Vagina (tissue), 2 donors: ENCODE measurements at regions of chr16 and their contacts with region 1.

Region 1: DNA sequence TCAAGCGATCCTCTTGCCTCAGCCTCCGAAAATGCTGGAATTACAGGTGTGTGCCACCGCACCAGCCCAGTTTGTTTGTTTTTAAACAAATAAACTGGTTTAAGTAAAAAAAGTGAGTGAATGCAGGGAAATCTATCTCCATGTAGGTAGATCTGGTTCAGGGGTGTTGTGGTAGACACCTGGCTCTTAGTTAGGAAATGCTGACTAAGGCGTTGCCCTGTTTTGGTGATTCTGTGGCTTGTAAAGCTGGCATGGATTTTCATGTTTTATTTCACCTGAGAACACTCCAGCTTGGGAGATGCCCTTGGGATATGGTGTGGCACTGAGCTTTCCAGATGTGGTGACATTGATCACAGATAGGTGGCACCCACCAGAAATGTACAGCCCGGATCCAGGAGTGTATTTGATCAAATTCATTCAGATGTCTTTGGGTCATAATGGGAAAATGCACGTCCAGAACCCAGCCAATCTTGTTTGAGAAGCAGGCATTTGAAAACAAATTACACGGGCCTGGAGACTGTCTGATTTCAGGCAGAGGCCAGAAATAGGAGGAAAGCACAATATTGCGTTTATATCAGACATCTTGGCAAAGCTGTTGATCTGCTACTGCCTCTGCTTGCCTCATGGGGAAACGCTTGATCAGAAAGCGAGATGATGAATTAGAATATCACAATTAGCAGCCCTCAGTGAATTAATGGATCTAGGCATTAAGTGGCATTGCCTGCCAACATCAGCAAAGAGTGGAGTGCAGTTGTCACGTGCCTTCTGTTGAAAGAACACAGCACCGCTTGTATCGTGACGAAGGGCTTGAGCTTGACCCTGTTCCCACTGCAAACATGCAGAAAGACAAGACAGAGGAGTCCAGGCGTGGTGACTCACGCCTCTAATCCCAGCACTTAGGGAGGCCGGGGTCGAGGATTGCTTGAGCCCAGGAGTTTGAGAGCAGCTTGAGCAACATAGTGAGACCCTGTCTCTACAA is 7.3 kb upstream of the IL34 start:
- DNase-seq: no peak
- H3K4me3 ChIP-seq: no peak overlapping the region
- H3K27ac ChIP-seq: peak overlapping the region; percentile 53
- H3K4me1 ChIP-seq: peaks cover 17% of the 10 kb centered on the region
- H3K27me3 ChIP-seq: no peaks in the 10 kb centered on the region
- CTCF ChIP-seq: no peak
- POLR2A ChIP-seq: no peak

Region 2: DNA sequence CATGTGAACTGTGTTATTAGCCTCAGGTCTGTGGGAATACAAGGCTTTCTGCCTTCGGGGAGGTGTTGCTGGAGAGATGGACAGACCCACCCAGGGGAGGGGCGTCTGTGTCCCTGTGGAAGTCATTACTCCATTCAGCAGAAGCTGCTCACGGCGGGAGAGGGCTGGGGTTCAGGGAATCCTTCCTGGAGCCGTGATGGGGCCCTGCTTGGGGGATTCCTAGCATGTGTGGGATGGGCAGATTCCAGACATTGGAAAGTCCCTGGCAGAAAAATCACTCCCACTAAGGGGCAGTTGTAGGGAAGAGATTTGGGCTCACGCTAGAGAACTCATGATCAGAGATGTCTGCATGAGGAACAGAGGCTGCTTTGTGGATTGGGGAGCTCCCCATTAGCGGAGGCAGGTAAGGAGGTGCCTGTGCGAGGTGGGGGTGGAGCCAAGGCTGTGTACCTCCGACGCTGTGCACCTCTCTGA is 49.1 kb before region 1 on chr16:
- intact Hi-C with region 1: loop called (anchors 5 kb)
- DNase-seq: no peak
- H3K4me3 ChIP-seq: peak overlapping the region; percentile 13 to 20
- H3K27ac ChIP-seq: peak overlapping the region; percentile 87
- H3K4me1 ChIP-seq: peaks cover 60% of the 10 kb centered on the region
- H3K27me3 ChIP-seq: no peaks in the 10 kb centered on the region
- CTCF ChIP-seq: no peak
- POLR2A ChIP-seq: no peak

Region 3: GRCh38 chr16:70610273-70611223 is 28.6 kb before region 1 on chr16:
- intact Hi-C with region 1: no loop called
- DNase-seq: no peak
- H3K4me3 ChIP-seq: no peak overlapping the region
- H3K27ac ChIP-seq: no peak overlapping the region
- H3K4me1 ChIP-seq: peaks cover 5% of the 10 kb centered on the region
- H3K27me3 ChIP-seq: no peaks in the 10 kb centered on the region
- CTCF ChIP-seq: no peak
- POLR2A ChIP-seq: no peak

Region 4: DNA sequence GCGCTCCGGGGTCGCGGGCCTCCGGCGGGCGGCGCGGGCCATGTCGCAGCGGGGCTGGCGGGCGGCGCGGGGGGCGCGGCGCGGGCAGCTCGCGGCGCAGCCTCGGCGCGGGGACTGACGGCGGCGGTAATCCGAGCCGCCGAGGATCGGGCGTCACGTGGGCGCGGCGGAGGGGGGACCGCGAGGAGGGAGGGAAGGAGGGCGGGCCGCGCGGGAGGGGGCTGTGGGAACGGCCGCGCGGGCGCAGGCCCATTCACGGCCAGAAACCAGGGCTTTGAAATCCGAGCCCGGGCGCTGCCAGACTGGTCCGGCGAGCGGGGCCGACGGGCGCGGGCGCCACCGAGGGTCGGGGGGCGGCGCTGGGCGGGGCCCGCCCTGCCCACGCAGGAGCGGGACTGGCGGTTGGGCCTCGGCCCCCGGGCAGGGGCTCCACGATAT is 46.9 kb after region 1 on chr16 and contains the start of gene MTSS2:
- intact Hi-C with region 1: no loop called
- DNase-seq: no peak
- H3K4me3 ChIP-seq: peak within 1 kb of the TSS; percentile 73 to 91
- H3K27ac ChIP-seq: peak within 1 kb of the TSS; percentile 98
- H3K4me1 ChIP-seq: peaks cover 86% of the 10 kb centered on the region
- H3K27me3 ChIP-seq: no peaks in the 10 kb centered on the region
- CTCF ChIP-seq: no peak
- POLR2A ChIP-seq: peak in 1 of 2 donors; percentile 63
- total RNA-seq, gene MTSS2: 102 TPM

Region 5: DNA sequence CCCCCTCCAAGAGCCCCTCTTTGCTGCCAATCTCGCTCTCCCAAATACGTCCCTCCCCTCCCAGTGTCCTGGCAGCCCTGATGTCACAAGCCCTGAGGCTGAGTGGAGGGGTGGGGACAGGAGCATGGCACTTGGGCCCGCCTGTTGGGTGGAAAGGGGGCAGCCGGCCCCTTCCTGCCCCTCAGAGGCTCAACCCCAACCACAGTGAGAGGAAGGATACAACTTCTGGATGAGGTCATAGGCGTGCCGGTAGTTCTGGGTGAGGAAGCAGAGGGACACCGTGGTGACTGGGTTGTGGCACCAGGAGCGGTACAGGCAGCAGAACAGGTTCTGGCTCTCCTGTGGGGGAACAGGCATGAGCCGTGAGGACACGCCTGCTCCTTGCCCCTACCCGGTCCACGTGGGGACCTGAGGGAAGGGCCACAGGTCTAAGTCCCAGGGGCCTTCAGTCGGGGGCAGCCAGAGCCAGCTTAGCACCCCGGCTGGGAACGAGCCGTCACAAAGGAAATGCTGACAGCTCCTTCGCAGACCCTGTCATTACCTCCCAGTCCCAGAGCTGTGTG is 57.9 kb after region 1 on chr16:
- intact Hi-C with region 1: no loop called
- DNase-seq: no peak
- H3K4me3 ChIP-seq: no peak overlapping the region
- H3K27ac ChIP-seq: peak overlapping the region; percentile 94
- H3K4me1 ChIP-seq: peaks cover 100% of the 10 kb centered on the region
- H3K27me3 ChIP-seq: no peaks in the 10 kb centered on the region
- CTCF ChIP-seq: no peak
- POLR2A ChIP-seq: no peak